K562 (cell line): ENCODE measurements at regions of chr19 and their contacts with region 1.

Region 1: GRCh38 chr19:55041617-55042349 is 3.7 kb upstream of the GP6 start:
- DNase-seq: peak; percentile 59 to 89 (median 72)
- ATAC-seq: peak; percentile 55
- H3K4me3 ChIP-seq: peak overlapping the region; percentile 20; the same call in 1 of the 2 replicates
- H3K27ac ChIP-seq: peak overlapping the region; percentile 96
- H3K4me1 ChIP-seq: peaks cover 44 to 51% of the 10 kb centered on the region in 2 experiments
- H3K27me3 ChIP-seq: no peaks in the 10 kb centered on the region
- CTCF ChIP-seq: no peak
- EP300 ChIP-seq: peak; percentile 83
- POLR2A ChIP-seq: peak; percentile 65; the same call in 1 of the 2 replicates
- RAD21 ChIP-seq: no peak

Region 2: GRCh38 chr19:55005684-55006488 is 35.9 kb before region 1 on chr19:
- CTCF ChIA-PET with region 1: no interaction called
- POLR2A ChIA-PET with region 1: no interaction called
- in situ Hi-C with region 1: no loop called
- intact Hi-C with region 1: loop called (anchors 2 kb)
- DNase-seq: peak; percentile 82 to 94 (median 88)
- ATAC-seq: peak; percentile 95
- H3K4me3 ChIP-seq: peak overlapping the region; percentile 61
- H3K27ac ChIP-seq: peak overlapping the region; percentile 81
- H3K4me1 ChIP-seq: peaks cover 0 to 4% of the 10 kb centered on the region in 2 experiments; a peak in 4 of 5 replicates
- H3K27me3 ChIP-seq: no peaks in the 10 kb centered on the region
- CTCF ChIP-seq: no peak
- EP300 ChIP-seq: peak; percentile 56; the same call in 1 of the 2 replicates
- POLR2A ChIP-seq: peak; percentile 97
- RAD21 ChIP-seq: no peak

Region 3: DNA sequence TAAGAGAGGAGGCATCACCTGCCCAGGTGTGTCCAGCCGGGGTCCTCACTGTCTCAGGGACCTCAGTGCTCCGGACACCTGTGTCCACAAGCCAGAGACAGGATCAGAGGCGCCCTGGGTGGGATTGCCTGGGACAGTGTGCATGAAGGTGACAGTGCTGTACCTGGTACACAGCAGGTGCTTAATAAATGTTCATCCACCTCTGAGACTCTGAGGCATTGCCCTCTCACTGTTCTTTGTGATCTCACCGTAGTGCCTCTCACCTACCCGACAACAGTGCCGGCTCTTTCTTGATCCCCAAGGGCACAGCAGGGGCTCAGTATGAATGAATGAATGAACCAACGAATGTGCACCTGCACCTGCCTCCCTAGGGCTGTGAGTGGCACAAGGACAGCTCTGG is 12.0 kb after region 1 on chr19:
- CTCF ChIA-PET with region 1: no interaction called
- POLR2A ChIA-PET with region 1: interaction called, 15 read pairs
- in situ Hi-C with region 1: no loop called
- intact Hi-C with region 1: no loop called
- DNase-seq: no peak
- ATAC-seq: no peak
- H3K4me3 ChIP-seq: no peak overlapping the region
- H3K27ac ChIP-seq: no peak overlapping the region
- H3K4me1 ChIP-seq: peaks cover 0 to 3% of the 10 kb centered on the region in 2 experiments; a peak in 1 of 5 replicates
- H3K27me3 ChIP-seq: no peaks in the 10 kb centered on the region
- CTCF ChIP-seq: no peak
- EP300 ChIP-seq: no peak
- POLR2A ChIP-seq: peak; percentile 48
- RAD21 ChIP-seq: no peak

Region 4: GRCh38 chr19:55132453-55133129 is 90.8 kb after region 1 on chr19:
- CTCF ChIA-PET with region 1: no interaction called
- POLR2A ChIA-PET with region 1: no interaction called
- in situ Hi-C with region 1: no loop called
- intact Hi-C with region 1: no loop called
- DNase-seq: no peak
- ATAC-seq: no peak
- H3K4me3 ChIP-seq: no peak overlapping the region
- H3K27ac ChIP-seq: no peak overlapping the region
- H3K4me1 ChIP-seq: peaks cover 0 to 15% of the 10 kb centered on the region in 2 experiments; a peak in 3 of 5 replicates
- H3K27me3 ChIP-seq: no peaks in the 10 kb centered on the region
- CTCF ChIP-seq: no peak
- EP300 ChIP-seq: no peak
- POLR2A ChIP-seq: no peak
- RAD21 ChIP-seq: no peak